ENCODE measurements at regions of chr9 and their contacts with region 1.

Region 1: GRCh38 chr9:91422758-91423711 is 597 bp downstream of the NFIL3 start:
- DNase-seq: peak; percentile 36 to 86 (median 68)

Region 2: DNA sequence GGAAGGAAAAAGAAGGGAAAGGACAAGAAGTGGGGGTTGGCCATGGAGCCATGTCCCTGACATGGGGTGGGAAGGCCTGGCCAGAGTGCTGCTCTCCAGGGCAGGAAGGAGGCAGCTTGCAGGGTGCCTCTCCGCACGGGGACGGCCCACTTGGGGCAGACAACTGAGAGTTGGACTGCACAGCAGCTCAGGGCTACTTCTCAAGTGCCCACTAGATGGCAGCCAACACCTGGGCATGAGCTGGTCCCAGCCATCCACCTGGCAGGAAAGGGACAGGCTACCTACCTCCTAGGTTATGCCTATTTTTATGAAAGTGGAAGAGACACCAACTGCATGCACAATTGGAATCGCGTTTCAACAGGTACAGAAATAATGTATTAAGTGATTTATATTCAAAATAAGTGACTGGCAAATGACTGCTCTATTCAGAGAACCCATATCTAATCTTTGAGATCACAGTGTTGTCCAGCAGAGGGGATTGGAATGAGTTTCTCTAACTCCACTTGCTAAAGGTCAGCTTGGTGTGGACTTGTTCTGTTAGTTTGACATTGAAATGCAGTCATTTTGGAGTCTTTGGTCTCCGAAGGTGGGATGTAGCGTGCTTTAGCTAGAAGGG is 508.1 kb before region 1 on chr9:
- intact Hi-C with region 1: loop called (anchors 10 kb)
- DNase-seq: peak; percentile 45 to 91 (median 78)

Region 3: DNA sequence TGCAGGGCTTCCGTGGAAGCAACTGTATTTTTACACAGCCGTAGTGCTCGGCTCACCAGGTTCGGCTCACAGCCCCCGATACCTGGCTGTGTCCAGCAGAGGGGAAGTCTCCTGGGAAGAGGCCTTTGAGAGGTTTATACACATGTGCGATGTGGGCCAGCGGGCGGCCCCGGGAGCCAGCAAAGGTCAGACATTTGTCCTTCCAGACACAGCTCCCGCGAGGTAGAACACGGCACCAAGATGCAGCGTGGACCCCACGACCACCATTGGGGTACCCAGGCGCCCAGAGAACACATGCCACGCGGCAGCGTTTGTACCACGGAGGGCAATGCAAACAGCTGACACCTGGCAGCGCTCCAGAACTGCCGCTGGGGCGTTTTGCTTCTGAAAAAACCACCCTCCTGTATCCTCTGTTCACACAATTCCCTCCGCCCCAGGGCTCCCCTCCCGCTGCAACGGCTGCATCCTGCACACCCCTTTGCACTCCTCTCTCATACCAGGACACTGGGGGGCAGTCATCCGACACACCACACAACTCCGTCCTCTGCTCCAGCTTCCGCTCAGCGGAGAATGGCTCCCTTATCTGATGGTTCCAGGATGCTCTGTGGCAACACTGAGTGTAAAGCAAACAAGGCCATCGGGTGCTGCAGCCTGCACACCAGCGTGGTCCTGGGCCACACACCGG is 386.1 kb before region 1 on chr9:
- intact Hi-C with region 1: loop called (anchors 5 kb)
- DNase-seq: peak; percentile 68 to 93 (median 84)

Region 4: GRCh38 chr9:91193658-91194391 is 229.2 kb before region 1 on chr9:
- intact Hi-C with region 1: loop called (anchors 5 kb)
- DNase-seq: peak; percentile 32 to 84 (median 70)

Region 5: GRCh38 chr9:91207729-91208418 is 215.2 kb before region 1 on chr9:
- intact Hi-C with region 1: loop called (anchors 5 kb)
- DNase-seq: peak in 1 of 42 donors; percentile 41

Region 6: GRCh38 chr9:91282292-91282691 is 140.7 kb before region 1 on chr9:
- intact Hi-C with region 1: no loop called
- DNase-seq: no peak

Region 7: DNA sequence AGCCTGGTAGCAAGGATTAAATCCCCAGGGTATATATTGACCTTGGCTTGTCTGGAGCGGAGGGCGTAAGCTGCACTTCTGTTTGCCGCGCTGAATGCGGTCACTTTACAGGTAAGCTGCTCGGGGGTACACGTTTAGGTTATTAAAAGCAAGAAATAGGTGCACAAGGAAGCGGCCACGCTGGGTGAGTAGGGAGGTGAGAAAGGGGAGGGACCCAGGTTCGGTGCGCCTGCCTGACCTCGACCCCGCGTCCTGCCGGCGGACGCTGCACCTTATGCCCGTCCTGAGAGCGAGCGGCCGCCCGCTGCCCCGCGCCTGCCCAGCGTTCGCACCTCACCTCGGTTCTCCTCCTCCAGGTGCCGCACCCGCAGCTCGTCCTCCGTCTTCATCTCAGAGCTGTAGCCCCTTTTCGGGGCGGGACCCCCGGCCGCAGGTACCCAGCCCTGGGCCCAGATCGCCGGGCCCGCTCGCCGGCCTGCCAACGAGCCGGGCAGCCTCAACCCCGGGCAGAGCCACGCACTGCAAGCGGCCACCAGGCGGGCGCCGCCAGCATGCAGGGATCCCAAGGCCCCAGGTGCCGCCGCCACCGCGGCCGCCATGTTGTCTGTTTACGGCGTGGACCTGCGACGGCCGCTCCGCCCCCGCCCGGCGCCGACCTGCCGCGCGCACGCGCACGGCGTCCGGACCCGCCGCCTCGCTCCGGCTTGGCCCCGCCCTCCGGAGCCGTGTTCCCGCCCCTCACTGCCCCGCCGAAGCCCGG is 61.6 kb before region 1 on chr9 and contains the start of gene AUH:
- intact Hi-C with region 1: loop called (anchors 5 kb)
- DNase-seq: peak; percentile 59 to 95 (median 88)

Measured in head of caudate nucleus (tissue), 42 donors.